CD4-positive, alpha-beta T cell (primary cell): ENCODE measurements at regions of chr2 and their contacts with region 1.

Region 1: GRCh38 chr2:54015798-54016699 is 45.3 kb upstream of the PSME4 start:
- DNase-seq: no peak
- ATAC-seq: no peak
- H3K4me3 ChIP-seq: no peak overlapping the region
- H3K4me3 Mint-ChIP-seq: no peak overlapping the region
- H3K27ac ChIP-seq: no peak overlapping the region
- H3K27ac Mint-ChIP-seq: peak overlapping the region; percentile 75
- H3K4me1 ChIP-seq: peaks cover 33% of the 10 kb centered on the region
- H3K4me1 Mint-ChIP-seq: peaks cover 46% of the 10 kb centered on the region
- H3K27me3 ChIP-seq: no peaks in the 10 kb centered on the region
- H3K27me3 Mint-ChIP-seq: no peaks in the 10 kb centered on the region
- CTCF ChIP-seq: no peak

Region 2: DNA sequence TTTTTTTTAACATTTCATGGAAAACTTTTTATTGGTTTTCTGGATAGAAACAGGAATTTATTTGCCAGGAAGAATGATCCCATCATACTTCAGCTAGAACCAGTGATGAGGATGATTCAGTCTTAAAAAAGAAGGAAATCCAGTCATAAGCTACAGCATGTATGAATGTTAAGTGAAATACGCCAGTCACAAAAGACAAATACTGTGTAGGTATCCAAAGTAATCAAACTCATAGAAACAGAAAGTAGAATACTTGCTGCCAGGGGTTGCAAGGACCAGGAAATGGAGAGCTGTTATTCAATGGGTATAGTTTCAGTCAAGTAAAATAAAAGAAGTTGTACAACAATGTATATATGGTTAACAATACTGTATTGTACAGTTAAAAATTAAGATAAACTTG is 66.6 kb before region 1 on chr2:
- CTCF ChIA-PET with region 1: no interaction called
- POLR2A ChIA-PET with region 1: interaction called, 4 read pairs
- intact Hi-C with region 1: loop called in 1 of 2 experiments (anchors 5 kb)
- DNase-seq: no peak
- ATAC-seq: no peak
- H3K4me3 ChIP-seq: no peak overlapping the region
- H3K4me3 Mint-ChIP-seq: no peak overlapping the region
- H3K27ac ChIP-seq: no peak overlapping the region
- H3K27ac Mint-ChIP-seq: peak overlapping the region; percentile 0
- H3K4me1 ChIP-seq: peaks cover 5% of the 10 kb centered on the region
- H3K4me1 Mint-ChIP-seq: peaks cover 58% of the 10 kb centered on the region
- H3K27me3 ChIP-seq: no peaks in the 10 kb centered on the region
- H3K27me3 Mint-ChIP-seq: no peaks in the 10 kb centered on the region
- CTCF ChIP-seq: no peak